ENCODE measurements at regions of chr5 and their contacts with region 1.

Region 1: DNA sequence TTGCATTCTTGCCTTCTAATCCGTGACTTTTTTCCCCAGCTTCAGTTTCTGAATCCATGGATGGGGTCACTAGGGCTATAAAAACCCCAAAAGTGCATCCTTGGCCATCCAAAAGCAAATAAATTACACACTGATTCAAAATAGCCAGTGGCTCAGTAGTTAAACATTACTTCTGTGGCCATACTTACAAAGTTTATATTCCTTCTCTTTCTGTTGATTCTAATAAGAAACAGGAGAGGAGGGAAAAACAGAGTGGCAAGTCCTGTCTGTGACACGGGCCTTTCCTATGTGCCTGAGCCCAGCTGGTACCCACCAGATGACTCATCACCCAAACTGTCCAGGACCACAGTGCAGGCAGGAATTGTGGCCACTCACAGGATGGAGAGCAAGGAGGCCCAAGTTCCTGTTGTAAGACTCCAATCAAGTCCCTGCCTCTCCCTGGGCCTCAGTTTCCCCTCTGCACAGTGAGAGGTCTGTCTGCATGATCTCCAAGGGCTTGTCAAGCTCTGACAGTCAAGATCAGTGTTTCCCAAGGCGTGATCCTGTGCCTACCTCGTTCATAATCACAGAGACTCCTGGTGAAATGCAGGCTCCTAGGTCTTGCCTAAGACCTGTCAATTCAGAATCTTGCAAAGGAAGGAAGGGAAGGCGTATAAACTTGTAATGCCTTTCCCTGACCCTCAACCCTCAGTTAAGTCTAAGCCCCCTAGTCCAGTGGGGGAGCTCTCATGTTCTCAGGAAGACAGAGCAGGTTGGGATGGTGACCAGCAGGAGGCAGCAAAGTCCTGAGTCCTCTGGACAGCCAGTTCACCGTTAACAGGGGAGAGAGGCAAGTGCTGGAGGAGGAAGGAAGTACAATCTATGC is 29.5 kb downstream of the TNIP1 start:
- DNase-seq: peak; percentile 86
- H3K4me3 Mint-ChIP-seq: no peak overlapping the region
- H3K27ac Mint-ChIP-seq: peak overlapping the region; percentile 2
- H3K4me1 Mint-ChIP-seq: peaks cover 65% of the 10 kb centered on the region
- H3K27me3 Mint-ChIP-seq: no peaks in the 10 kb centered on the region
- CTCF ChIP-seq: peak; percentile 88

Region 2: DNA sequence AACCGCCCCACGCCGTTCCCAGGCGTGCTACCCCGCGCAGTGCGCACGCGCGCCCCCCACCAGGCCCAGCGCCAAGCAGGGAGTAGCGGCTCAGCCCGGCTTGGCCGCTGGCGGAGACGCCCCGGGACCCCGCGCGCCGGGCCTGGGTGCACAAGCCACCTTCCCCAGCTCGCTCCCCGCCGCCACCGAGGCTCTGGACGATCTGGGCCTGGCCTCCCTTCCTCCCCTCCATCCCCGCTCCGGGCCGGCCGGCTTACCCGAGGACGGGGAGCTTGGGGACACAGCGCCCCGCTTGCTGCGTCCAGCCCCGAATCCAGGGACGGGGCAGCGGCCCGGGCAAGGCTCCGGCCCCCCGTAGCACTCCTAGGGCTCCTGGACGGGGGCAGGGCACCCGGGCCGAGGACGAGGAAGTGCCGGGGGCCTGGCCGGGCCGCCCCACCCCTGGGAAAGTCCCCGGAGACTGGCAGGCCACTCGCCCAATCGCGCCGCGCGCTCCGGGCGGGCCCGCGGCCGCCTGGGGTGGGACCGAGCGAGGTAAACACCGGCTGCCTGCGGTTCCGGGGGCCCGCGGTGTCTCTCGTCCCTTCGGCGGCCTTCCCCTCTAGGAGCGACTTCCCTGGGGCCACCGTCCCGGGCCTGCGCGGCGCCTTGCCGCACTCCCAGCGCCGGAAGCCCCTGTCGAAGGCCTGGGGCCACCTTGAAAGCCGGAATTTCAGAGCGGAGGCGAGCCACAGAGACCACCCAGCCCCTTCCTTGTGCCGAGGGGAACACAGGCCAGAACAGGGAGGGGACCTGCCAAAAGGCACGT is 29.5 kb after region 1 on chr5 and contains the start of gene TNIP1:
- CTCF ChIA-PET with region 1: interaction called, 14 read pairs
- intact Hi-C with region 1: loop called (anchors 5 kb)
- DNase-seq: peak; percentile 99
- H3K4me3 Mint-ChIP-seq: peak within 1 kb of the TSS; percentile 75
- H3K27ac Mint-ChIP-seq: peak within 1 kb of the TSS; percentile 85
- H3K4me1 Mint-ChIP-seq: peaks cover 83% of the 10 kb centered on the region
- H3K27me3 Mint-ChIP-seq: no peaks in the 10 kb centered on the region
- CTCF ChIP-seq: no peak
- total RNA-seq, gene TNIP1: 321 and 339 TPM in 2 replicates

Region 3: GRCh38 chr5:151086905-151087360 is 35.6 kb after region 1 on chr5:
- CTCF ChIA-PET with region 1: interaction called, 14 read pairs
- intact Hi-C with region 1: loop called (anchors 5 kb)
- DNase-seq: peak; percentile 76
- H3K4me3 Mint-ChIP-seq: peak overlapping the region; percentile 75
- H3K27ac Mint-ChIP-seq: peak overlapping the region; percentile 85
- H3K4me1 Mint-ChIP-seq: peaks cover 73% of the 10 kb centered on the region
- H3K27me3 Mint-ChIP-seq: no peaks in the 10 kb centered on the region
- CTCF ChIP-seq: no peak